Naive thymus-derived CD4-positive, alpha-beta T cell (primary cell): ENCODE measurements at regions of chr2 and their contacts with region 1.

Region 1: DNA sequence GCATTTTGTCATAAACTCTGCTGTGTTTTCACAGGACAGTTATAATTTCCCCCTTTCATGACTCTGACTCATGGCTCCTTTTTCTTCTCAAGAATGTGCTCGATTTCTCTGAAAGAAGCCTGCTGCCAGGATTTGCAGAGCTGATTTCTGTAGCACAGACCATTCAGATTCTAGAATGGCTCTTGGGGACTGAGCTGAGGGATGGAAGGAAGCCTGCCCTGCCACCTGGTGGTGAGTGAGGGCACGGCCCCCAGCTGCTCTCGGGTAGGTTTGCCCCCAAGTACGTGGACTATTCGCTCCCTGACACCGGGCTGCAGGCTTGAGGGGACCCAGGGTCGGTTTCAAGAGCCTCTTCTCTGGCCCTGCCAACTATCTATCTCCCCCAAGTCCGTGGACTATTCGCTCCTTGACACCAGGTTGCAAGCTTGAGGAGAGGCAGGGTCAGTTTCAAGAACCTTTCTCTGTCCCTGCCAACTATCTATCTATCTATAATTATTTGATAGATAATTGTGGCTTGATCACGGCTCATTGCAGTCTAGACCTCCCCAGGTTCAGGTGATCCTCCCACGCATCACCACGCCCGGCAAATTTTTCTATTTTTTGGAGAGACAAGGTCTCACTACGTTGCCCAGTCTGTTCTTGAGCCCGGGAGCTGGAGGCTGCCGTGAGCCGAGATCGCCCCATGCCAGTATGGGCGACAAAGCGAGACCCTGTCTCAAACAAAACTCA is 1.4 kb upstream of the SMYD5 start:
- DNase-seq: peak; percentile 48 to 71 (median 64)
- ATAC-seq: peak; percentile 76
- H3K4me3 ChIP-seq: no peak overlapping the region
- H3K4me3 Mint-ChIP-seq: peak overlapping the region in 8 of 10 donors; percentile 15 to 97 (median 62)
- H3K27ac ChIP-seq: no peak overlapping the region
- H3K27ac Mint-ChIP-seq: peak overlapping the region in 6 of 9 donors; percentile 40 to 98 (median 91)
- H3K4me1 ChIP-seq: peaks cover 14 to 18% of the 10 kb centered on the region in 2 donors
- H3K4me1 Mint-ChIP-seq: peaks cover 16 to 44% (median 36%) of the 10 kb centered on the region in 7 donors
- H3K27me3 ChIP-seq: no peaks in the 10 kb centered on the region
- H3K27me3 Mint-ChIP-seq: peaks cover 4 to 8% (median 7%) of the 10 kb centered on the region in 5 donors

Region 2: GRCh38 chr2:72770879-72771461 is 441.6 kb before region 1 on chr2:
- CTCF ChIA-PET with region 1: no interaction called
- POLR2A ChIA-PET with region 1: no interaction called
- intact Hi-C with region 1: loop called in 1 of 2 experiments (anchors 1 kb)
- DNase-seq: peak in 7 of 9 donors; percentile 46 to 75 (median 74)
- ATAC-seq: peak; percentile 84
- H3K4me3 ChIP-seq: no peak overlapping the region
- H3K4me3 Mint-ChIP-seq: peak overlapping the region in 1 of 10 donors; percentile 4
- H3K27ac ChIP-seq: no peak overlapping the region
- H3K27ac Mint-ChIP-seq: peak overlapping the region in 1 of 9 donors; percentile 41
- H3K4me1 ChIP-seq: no peaks in the 10 kb centered on the region
- H3K4me1 Mint-ChIP-seq: no peaks in the 10 kb centered on the region
- H3K27me3 ChIP-seq: no peaks in the 10 kb centered on the region
- H3K27me3 Mint-ChIP-seq: no peaks in the 10 kb centered on the region

Region 3: DNA sequence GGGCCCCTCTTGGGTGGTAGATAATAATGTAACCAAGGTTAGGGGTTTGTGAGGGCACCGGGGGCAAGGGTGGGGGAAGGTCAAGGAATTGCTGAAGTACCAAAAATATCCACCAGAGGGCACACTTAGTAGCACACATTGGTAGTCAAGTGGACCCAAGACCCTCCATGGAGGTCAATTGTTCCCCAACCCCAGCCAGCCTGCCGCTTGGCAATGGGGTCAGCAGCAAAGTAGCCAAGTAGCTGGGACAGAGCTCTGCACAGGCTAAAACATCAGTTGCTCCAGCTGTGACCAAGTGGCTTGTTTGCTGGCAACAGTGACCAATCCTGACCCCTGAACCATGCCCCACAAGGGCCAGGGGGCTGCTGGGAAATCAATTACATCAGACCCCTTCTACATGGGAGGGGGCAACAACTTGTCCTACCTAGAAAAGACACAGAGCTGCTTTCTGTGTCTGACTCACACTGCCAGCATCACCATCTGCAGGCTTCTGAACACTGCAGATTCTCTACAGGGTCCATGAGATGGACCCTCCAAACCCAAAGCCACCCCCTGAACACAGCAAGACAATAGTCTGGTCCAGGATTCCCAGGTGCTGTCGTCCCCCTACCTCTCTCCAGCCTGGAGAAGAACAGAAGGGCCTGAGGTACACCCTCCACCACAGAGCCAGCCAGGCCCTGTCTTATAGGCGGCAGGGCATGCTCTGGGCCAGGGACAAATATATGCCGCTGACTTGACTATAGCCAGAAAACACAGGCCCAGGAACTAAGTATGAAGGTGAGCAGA is 219.3 kb before region 1 on chr2:
- CTCF ChIA-PET with region 1: no interaction called
- POLR2A ChIA-PET with region 1: no interaction called
- intact Hi-C with region 1: loop called in 1 of 2 experiments (anchors 1 kb)
- DNase-seq: peak; percentile 14 to 68 (median 42)
- ATAC-seq: peak; percentile 71
- H3K4me3 ChIP-seq: no peak overlapping the region
- H3K4me3 Mint-ChIP-seq: no peak overlapping the region
- H3K27ac ChIP-seq: no peak overlapping the region
- H3K27ac Mint-ChIP-seq: no peak overlapping the region
- H3K4me1 ChIP-seq: no peaks in the 10 kb centered on the region
- H3K4me1 Mint-ChIP-seq: peaks cover 0 to 9% (median 0%) of the 10 kb centered on the region in 7 donors
- H3K27me3 ChIP-seq: no peaks in the 10 kb centered on the region
- H3K27me3 Mint-ChIP-seq: no peaks in the 10 kb centered on the region

Region 4: DNA sequence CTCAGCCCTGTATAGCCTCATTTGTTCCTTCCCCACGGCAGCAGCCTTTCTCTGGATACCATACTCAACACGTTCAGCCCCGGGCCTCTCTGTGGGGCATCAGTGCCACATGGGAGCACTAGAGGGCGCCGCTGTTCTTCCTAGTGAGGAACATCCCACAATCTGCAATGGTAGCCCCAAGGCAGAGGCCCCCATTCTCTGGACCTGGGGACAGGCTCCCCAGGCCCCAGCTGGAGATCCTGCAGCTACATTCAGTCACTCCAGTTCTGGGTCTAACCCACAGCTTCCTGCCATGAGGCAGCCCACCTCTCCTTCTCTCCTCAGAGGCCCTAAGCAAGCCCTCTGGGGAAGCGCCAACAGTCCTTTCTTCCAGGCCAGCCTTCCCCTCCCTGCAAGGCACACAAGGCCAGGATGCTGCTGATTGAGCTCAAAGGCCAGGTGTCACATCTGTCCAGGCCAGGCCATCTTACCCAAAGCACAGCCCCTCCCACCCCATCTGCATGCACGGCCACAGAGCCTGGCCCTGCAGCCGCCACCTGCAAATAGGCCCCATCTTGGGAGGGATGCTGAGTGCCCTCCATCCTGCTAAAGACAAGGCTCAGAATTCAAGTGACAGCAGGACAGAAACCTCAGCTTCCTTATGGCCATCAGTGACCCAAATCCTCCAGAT is 126.8 kb before region 1 on chr2:
- CTCF ChIA-PET with region 1: interaction called, 15 read pairs
- POLR2A ChIA-PET with region 1: no interaction called
- intact Hi-C with region 1: loop called (anchors 1 kb)
- DNase-seq: peak; percentile 52 to 79 (median 71)
- ATAC-seq: peak; percentile 92
- H3K4me3 ChIP-seq: no peak overlapping the region
- H3K4me3 Mint-ChIP-seq: no peak overlapping the region
- H3K27ac ChIP-seq: no peak overlapping the region
- H3K27ac Mint-ChIP-seq: peak overlapping the region in 1 of 9 donors; percentile 13
- H3K4me1 ChIP-seq: no peaks in the 10 kb centered on the region
- H3K4me1 Mint-ChIP-seq: peaks cover 0 to 2% (median 0%) of the 10 kb centered on the region in 7 donors
- H3K27me3 ChIP-seq: no peaks in the 10 kb centered on the region
- H3K27me3 Mint-ChIP-seq: no peaks in the 10 kb centered on the region

Region 5: DNA sequence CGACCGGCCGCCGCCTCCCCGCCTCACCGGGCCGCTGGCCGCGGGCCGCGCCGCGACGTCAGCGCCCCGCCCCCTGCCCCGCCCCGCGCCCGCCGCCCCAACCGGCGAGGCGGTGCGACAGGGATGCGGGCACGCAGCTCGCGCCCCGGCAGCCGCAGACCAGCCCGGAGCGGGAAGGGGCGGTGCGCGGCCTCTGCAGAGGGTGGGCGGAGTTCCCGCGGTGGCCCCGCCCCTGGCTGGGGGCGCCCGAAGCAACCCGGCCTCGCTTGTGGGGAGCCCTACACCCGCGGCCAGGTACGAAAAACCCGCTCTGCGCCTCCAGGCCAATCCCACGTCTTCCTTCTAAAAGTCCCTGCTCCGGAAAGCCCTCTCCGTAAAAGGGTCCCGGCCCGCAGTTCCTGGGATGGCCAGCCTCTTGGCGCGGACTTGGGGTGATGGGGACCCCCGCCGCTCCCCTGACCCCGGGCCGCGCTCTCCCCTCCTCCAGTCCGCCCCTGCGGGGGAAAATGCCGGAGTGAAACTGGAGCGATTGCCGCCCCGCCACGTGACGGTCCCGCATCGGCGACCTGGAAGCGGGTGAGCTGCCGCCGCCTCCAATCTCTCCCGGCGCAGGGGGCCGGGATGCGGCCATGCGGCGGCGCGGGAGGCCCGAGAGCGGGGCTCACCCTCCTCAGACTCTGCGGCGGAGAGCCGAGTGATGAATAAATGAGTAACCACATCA is 99.5 kb before region 1 on chr2 and contains the start of gene RAB11FIP5:
- CTCF ChIA-PET with region 1: interaction called, 3 read pairs
- POLR2A ChIA-PET with region 1: interaction called, 7 read pairs
- intact Hi-C with region 1: loop called (anchors 1 kb)
- DNase-seq: peak; percentile 70 to 88 (median 76)
- ATAC-seq: peak; percentile 94
- H3K4me3 ChIP-seq: peak within 1 kb of the TSS; percentile 68
- H3K4me3 Mint-ChIP-seq: peak within 1 kb of the TSS; percentile 80 to 92 (median 88)
- H3K27ac ChIP-seq: peak within 1 kb of the TSS; percentile 61
- H3K27ac Mint-ChIP-seq: peak within 1 kb of the TSS in 8 of 9 donors; percentile 41 to 81 (median 74)
- H3K4me1 ChIP-seq: peaks cover 4 to 13% of the 10 kb centered on the region in 2 donors
- H3K4me1 Mint-ChIP-seq: peaks cover 9 to 33% (median 28%) of the 10 kb centered on the region in 7 donors
- H3K27me3 ChIP-seq: no peaks in the 10 kb centered on the region
- H3K27me3 Mint-ChIP-seq: peaks cover 0 to 14% (median 0%) of the 10 kb centered on the region in 5 donors
- total RNA-seq, gene RAB11FIP5: 8.6 to 13.2 (median 11.2) TPM

Region 6: GRCh38 chr2:73268830-73269685 is 56.4 kb after region 1 on chr2:
- CTCF ChIA-PET with region 1: interaction called, 3 read pairs
- POLR2A ChIA-PET with region 1: no interaction called
- intact Hi-C with region 1: loop called in 1 of 2 experiments (anchors 1 kb)
- DNase-seq: peak; percentile 62 to 81 (median 76)
- ATAC-seq: peak; percentile 91
- H3K4me3 ChIP-seq: peak overlapping the region; percentile 35
- H3K4me3 Mint-ChIP-seq: peak overlapping the region in 9 of 10 donors; percentile 32 to 78 (median 64)
- H3K27ac ChIP-seq: peak overlapping the region; percentile 62
- H3K27ac Mint-ChIP-seq: peak overlapping the region in 4 of 9 donors; percentile 29 to 81 (median 56)
- H3K4me1 ChIP-seq: peaks cover 0 to 12% of the 10 kb centered on the region in 2 donors
- H3K4me1 Mint-ChIP-seq: peaks cover 23 to 34% (median 26%) of the 10 kb centered on the region in 7 donors
- H3K27me3 ChIP-seq: no peaks in the 10 kb centered on the region
- H3K27me3 Mint-ChIP-seq: no peaks in the 10 kb centered on the region

Region 7: GRCh38 chr2:73293534-73294171 is 81.0 kb after region 1 on chr2 and contains the start of gene EGR4:
- CTCF ChIA-PET with region 1: interaction called, 14 read pairs
- POLR2A ChIA-PET with region 1: no interaction called
- intact Hi-C with region 1: loop called (anchors 1 to 2 kb)
- DNase-seq: peak; percentile 70 to 96 (median 88)
- ATAC-seq: peak; percentile 94
- H3K4me3 ChIP-seq: peak within 1 kb of the TSS; percentile 72
- H3K4me3 Mint-ChIP-seq: peak within 1 kb of the TSS; percentile 59 to 82 (median 72)
- H3K27ac ChIP-seq: no peak within 1 kb of the TSS
- H3K27ac Mint-ChIP-seq: peak within 1 kb of the TSS in 4 of 9 donors; percentile 9 to 81 (median 30)
- H3K4me1 ChIP-seq: peaks cover 17 to 18% of the 10 kb centered on the region in 2 donors
- H3K4me1 Mint-ChIP-seq: peaks cover 7 to 25% (median 14%) of the 10 kb centered on the region in 7 donors
- H3K27me3 ChIP-seq: peaks cover 11 to 25% of the 10 kb centered on the region in 2 donors
- H3K27me3 Mint-ChIP-seq: peaks cover 48 to 83% (median 66%) of the 10 kb centered on the region in 5 donors
- total RNA-seq, gene EGR4: 0.15 to 0.16 (median 0.15) TPM in 3 of 5 experiments, not detected in the others

Region 8: DNA sequence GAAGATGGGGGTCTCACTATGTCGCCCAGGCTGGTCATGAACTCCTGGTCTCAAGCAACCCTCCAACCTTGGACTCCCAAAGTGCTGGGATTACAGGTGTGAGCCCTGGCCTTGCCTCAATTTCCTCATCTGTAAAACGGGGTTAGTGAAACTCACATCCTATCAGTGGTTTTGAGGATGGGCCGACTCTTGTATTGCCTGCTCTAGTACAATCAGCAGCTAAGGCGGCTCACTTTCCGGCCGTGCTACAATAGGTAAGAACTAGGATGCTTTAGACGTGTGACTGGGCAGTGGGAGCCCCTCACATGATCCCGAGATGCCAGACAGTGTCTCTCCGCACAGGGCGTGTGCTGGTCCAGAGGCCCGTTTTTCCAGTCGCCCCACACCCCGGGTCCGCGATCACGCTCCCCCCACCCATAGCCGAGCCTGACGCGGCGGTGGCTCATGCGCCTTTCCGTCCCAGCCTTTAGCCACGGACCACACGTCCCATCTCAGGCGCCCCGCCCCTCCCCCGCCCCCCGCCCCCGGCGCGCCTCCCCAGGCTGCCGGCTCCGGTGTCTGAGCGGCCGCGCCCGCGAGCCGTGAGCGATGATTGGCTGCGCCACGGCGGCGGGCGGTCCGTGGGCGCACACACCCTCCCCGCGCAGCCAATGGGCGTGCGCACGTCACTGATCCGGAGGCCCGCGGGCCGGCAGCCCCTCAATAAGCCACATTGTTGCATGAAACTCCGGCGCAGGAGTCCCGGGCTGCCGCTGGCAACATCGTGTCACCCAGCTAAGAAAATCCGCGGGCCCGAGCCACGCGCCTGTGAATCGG is 1621.0 kb after region 1 on chr2 and contains the start of gene HK2:
- CTCF ChIA-PET with region 1: no interaction called
- POLR2A ChIA-PET with region 1: no interaction called
- intact Hi-C with region 1: no loop called
- DNase-seq: peak; percentile 68 to 87 (median 78)
- ATAC-seq: peak; percentile 91
- H3K4me3 ChIP-seq: peak within 1 kb of the TSS; percentile 72
- H3K4me3 Mint-ChIP-seq: peak within 1 kb of the TSS; percentile 89 to 97 (median 94)
- H3K27ac ChIP-seq: peak within 1 kb of the TSS; percentile 67
- H3K27ac Mint-ChIP-seq: peak within 1 kb of the TSS; percentile 35 to 95 (median 91)
- H3K4me1 ChIP-seq: peaks cover 14 to 32% of the 10 kb centered on the region in 2 donors
- H3K4me1 Mint-ChIP-seq: peaks cover 28 to 49% (median 33%) of the 10 kb centered on the region in 7 donors
- H3K27me3 ChIP-seq: no peaks in the 10 kb centered on the region
- H3K27me3 Mint-ChIP-seq: peaks cover 0 to 7% (median 0%) of the 10 kb centered on the region in 5 donors
- total RNA-seq, gene HK2: 11.1 to 74.6 (median 17.7) TPM